Breast epithelium (tissue), 4 donors: ENCODE measurements at regions of chr15 and their contacts with region 1.

Region 1: DNA sequence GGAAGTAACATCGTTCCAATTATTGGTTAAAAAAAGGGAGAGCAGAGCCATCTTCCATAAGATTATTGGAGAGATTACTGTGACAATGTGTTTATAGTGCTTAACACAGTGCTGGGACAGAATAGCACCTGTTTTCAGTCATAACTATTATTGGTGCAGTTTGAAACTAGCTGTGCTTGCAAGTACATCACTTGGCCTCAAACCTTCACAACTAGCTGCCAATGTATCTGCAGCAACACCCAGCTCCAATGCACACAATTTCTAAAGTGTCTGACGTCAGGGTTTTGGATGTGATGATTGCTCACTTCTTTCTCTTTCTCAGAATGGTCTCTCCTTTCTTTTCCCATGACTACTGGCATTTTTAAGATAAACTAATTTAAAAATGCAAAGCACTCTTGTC is 246.2 kb downstream of the SV2B start:
- DNase-seq: no peak
- H3K4me3 ChIP-seq: no peak overlapping the region
- H3K27ac ChIP-seq: no peak overlapping the region
- H3K4me1 ChIP-seq: no peaks in the 10 kb centered on the region
- H3K27me3 ChIP-seq: no peaks in the 10 kb centered on the region
- CTCF ChIP-seq: no peak
- POLR2A ChIP-seq: no peak

Region 2: GRCh38 chr15:91380114-91380513 is 33.9 kb after region 1 on chr15:
- intact Hi-C with region 1: loop called (anchors 2 kb)
- DNase-seq: no peak
- H3K4me3 ChIP-seq: no peak overlapping the region
- H3K27ac ChIP-seq: no peak overlapping the region
- H3K4me1 ChIP-seq: no peaks in the 10 kb centered on the region
- H3K27me3 ChIP-seq: no peaks in the 10 kb centered on the region
- CTCF ChIP-seq: no peak
- POLR2A ChIP-seq: no peak

Region 3: DNA sequence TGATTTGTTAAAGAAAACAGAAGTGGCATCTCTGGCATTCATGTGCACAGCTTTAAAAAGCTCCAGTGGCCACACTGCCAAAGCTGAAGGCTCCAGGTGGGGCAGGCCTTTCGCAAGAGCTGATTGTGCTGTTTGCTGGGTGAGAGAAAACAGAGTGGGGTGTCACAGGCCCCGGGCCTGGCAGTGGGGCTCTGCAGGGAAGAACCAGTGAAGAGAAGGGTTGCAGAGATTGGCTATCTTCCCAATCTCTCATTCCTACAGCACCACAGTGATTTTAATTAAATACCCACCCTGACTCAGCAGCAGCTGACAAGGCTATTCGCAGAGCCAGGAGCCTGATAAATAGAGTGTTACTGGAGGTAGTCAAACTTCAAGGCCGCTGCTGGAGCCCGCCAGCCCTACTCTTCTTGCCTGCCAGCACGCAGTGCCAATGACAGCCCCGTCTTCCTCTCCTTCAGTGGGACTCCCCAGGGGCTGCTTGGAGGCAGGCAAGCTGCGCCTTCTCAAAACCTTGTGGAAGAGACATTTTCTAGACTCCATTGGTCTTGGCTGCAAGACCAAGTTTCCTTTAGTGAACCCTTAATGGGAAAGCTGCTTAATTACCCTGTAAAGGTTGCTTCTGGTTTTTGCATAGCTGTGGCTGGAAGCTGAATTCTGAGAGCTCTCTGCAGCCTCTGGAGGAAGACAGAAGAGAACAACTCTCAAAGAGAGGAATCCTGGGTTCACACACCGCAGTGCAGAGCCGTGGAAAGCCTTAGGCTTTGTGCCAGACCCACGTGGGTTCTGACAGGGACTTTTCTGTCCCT is 281.4 kb after region 1 on chr15:
- intact Hi-C with region 1: no loop called
- DNase-seq: peak in 1 of 2 donors; percentile 27
- H3K4me3 ChIP-seq: no peak overlapping the region
- H3K27ac ChIP-seq: peak overlapping the region; percentile 26 to 40
- H3K4me1 ChIP-seq: no peaks in the 10 kb centered on the region
- H3K27me3 ChIP-seq: no peaks in the 10 kb centered on the region
- CTCF ChIP-seq: no peak
- POLR2A ChIP-seq: no peak

Region 4: GRCh38 chr15:91782221-91782620 is 436.0 kb after region 1 on chr15:
- intact Hi-C with region 1: no loop called
- DNase-seq: no peak
- H3K4me3 ChIP-seq: no peak overlapping the region
- H3K27ac ChIP-seq: no peak overlapping the region
- H3K4me1 ChIP-seq: no peaks in the 10 kb centered on the region
- H3K27me3 ChIP-seq: no peaks in the 10 kb centered on the region
- CTCF ChIP-seq: no peak
- POLR2A ChIP-seq: no peak